Heart left ventricle (tissue), 16 donors: ENCODE measurements at regions of chr15 and their contacts with region 1.

Region 1: DNA sequence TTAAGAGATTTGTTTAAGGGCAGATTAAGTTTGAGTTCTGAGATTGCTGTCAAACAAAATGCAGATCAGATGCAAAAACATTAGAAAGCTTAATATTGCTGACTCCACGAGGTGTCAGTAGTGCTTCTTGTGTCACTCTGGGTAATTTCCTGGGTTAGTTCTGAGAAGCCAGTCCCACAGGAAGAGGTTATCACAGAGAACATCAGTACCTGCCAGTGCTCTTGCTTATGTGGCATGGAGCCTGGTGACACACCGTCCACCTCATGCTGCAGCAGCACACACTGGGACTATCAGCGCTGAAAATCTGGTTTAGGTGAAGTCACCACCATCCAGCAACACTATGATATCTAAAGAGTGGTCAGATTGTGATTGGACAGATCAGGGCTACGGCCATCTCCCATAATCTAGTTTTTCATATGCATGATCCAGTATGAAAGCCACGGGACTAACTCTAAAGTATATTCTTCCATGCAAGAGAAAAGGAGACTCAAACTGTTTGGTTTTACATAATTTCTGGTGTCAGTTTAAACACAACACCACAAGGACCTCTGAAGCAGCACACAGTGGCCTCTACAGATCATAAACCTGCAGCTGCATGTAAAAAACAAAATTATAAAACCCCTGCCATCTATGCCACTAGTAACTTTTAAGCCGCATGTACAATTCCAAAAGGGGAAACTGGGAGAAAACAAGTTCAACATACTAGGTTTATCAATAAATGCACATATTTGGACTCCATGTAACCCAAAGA is 36.1 kb upstream of the MYO5C start:
- DNase-seq: no peak
- ATAC-seq: peak in 3 of 4 donors; percentile 59 to 75 (median 68)
- H3K4me3 ChIP-seq: no peak overlapping the region
- H3K27ac ChIP-seq: peak overlapping the region in 1 of 12 donors; percentile 33
- H3K4me1 ChIP-seq: peaks cover 0 to 4% (median 0%) of the 10 kb centered on the region in 12 donors
- H3K27me3 ChIP-seq: no peaks in the 10 kb centered on the region
- CTCF ChIP-seq: peak in 11 of 12 donors; percentile 8 to 59 (median 46)
- POLR2A ChIP-seq: no peak

Region 2: GRCh38 chr15:52256366-52256765 is 75.3 kb before region 1 on chr15:
- intact Hi-C with region 1: loop called in 1 of 10 experiments (anchors 10 kb)
- DNase-seq: peak in 4 of 5 donors; percentile 38 to 66 (median 60)
- ATAC-seq: peak; percentile 41 to 67 (median 54)
- H3K4me3 ChIP-seq: peak overlapping the region in 1 of 12 donors; percentile 3
- H3K27ac ChIP-seq: no peak overlapping the region
- H3K4me1 ChIP-seq: peaks cover 0 to 26% (median 12%) of the 10 kb centered on the region in 12 donors
- H3K27me3 ChIP-seq: no peaks in the 10 kb centered on the region
- CTCF ChIP-seq: peak; percentile 67 to 83 (median 74)
- POLR2A ChIP-seq: no peak

Region 3: GRCh38 chr15:52284164-52284563 is 47.5 kb before region 1 on chr15:
- intact Hi-C with region 1: no loop called
- DNase-seq: no peak
- ATAC-seq: no peak
- H3K4me3 ChIP-seq: no peak overlapping the region
- H3K27ac ChIP-seq: no peak overlapping the region
- H3K4me1 ChIP-seq: peaks cover 0 to 9% (median 0%) of the 10 kb centered on the region in 12 donors
- H3K27me3 ChIP-seq: no peaks in the 10 kb centered on the region
- CTCF ChIP-seq: no peak
- POLR2A ChIP-seq: no peak

Region 4: GRCh38 chr15:52379395-52380106 is 47.9 kb after region 1 on chr15:
- intact Hi-C with region 1: no loop called
- DNase-seq: no peak
- ATAC-seq: peak in 1 of 4 donors; percentile 47
- H3K4me3 ChIP-seq: no peak overlapping the region
- H3K27ac ChIP-seq: peak overlapping the region in 1 of 12 donors; percentile 22
- H3K4me1 ChIP-seq: no peaks in the 10 kb centered on the region
- H3K27me3 ChIP-seq: no peaks in the 10 kb centered on the region
- CTCF ChIP-seq: no peak
- POLR2A ChIP-seq: no peak

Region 5: GRCh38 chr15:52392008-52392687 is 60.5 kb after region 1 on chr15:
- intact Hi-C with region 1: loop called in 1 of 10 experiments (anchors 10 kb)
- DNase-seq: no peak
- ATAC-seq: peak; percentile 63 to 81 (median 75)
- H3K4me3 ChIP-seq: no peak overlapping the region
- H3K27ac ChIP-seq: no peak overlapping the region
- H3K4me1 ChIP-seq: peaks cover 0 to 28% (median 2%) of the 10 kb centered on the region in 12 donors
- H3K27me3 ChIP-seq: no peaks in the 10 kb centered on the region
- CTCF ChIP-seq: no peak
- POLR2A ChIP-seq: no peak

Region 6: DNA sequence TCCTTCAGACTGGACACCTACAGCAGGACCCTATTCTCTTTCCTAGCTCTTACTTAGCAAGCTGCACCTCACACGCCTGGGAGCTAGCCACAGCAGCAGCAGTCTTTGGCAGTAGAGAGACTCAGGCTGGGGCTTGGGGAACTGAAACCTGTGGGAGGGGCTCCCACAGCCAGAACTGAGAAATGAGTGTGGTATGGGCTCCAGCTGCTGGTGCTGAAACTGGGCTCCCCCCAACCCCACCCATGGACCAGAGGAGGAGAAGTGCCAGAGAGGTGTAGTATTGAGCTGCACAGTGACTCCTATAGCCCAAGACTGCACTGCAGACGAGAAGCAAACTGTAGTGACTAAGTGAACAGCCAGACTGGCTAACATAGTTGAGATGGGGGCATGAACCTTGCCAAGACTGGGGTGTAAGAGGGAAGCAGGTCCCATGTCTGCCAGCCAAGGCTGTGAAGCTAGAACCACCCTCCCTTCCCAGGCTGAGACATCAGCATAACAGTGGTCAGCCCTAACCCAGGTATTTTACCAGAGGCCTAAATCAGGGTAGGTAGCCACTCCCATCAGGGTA is 134.6 kb after region 1 on chr15:
- intact Hi-C with region 1: loop called in 2 of 10 experiments (anchors 10 kb)
- DNase-seq: peak; percentile 38 to 66 (median 48)
- ATAC-seq: peak; percentile 18 to 89 (median 79)
- H3K4me3 ChIP-seq: no peak overlapping the region
- H3K27ac ChIP-seq: peak overlapping the region in 1 of 12 donors; percentile 12
- H3K4me1 ChIP-seq: peaks cover 0 to 42% (median 8%) of the 10 kb centered on the region in 12 donors
- H3K27me3 ChIP-seq: no peaks in the 10 kb centered on the region
- CTCF ChIP-seq: no peak
- POLR2A ChIP-seq: no peak

Region 7: DNA sequence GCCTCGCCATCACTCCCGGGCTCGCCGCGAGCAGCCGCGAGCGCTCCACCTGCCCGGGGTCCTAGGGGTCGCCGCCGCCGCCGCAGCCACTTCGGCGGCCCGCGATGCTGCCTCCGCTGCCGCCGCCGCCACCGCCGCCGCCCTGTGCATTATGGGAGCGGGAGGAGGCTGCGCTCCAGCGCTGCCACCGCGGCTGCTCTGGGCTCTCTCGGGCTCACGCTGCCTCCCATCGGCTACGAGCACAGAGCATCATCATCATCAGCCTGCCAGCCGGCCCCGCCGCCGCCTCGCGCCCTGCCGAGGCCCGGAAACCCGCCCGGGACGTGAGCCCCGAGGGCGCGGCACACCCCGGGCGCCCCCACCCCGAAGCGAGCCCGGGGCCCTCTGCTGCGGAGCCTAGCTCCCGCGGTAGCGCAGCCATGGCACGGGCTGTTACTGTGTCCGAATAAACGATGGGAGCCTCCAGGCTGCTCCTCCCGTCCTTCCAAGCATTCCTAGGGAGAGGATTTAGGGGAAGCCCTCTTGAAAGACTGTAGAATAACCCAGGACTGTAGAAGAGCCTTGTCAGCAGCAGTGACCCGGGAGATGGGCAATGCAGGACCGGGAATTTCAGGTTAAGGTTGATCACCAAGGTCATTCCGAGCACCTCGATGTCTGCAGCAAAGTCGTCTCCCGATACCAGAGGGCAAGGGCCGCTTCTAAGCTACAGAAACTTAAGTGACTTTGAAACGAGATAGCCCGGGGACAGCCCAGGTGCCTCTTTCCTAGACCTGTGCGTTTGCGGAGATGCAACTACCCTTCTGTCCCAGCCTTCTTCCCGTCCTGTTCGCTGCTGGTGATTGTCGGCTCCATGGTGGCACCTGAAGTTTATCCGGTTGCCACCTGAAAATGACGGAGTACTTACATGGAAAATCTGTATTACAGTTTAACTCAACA is 197.6 kb after region 1 on chr15:
- intact Hi-C with region 1: loop called in 1 of 10 experiments (anchors 10 kb)
- DNase-seq: peak; percentile 72 to 87 (median 78)
- ATAC-seq: peak; percentile 74 to 93 (median 90)
- H3K4me3 ChIP-seq: peak overlapping the region; percentile 70 to 95 (median 80)
- H3K27ac ChIP-seq: peak overlapping the region in 11 of 12 donors; percentile 62 to 93 (median 81)
- H3K4me1 ChIP-seq: peaks cover 0 to 33% (median 15%) of the 10 kb centered on the region in 12 donors
- H3K27me3 ChIP-seq: peaks cover 0 to 8% (median 0%) of the 10 kb centered on the region in 9 donors
- CTCF ChIP-seq: peak in 5 of 12 donors; percentile 4 to 34 (median 8)
- POLR2A ChIP-seq: no peak

Region 8: DNA sequence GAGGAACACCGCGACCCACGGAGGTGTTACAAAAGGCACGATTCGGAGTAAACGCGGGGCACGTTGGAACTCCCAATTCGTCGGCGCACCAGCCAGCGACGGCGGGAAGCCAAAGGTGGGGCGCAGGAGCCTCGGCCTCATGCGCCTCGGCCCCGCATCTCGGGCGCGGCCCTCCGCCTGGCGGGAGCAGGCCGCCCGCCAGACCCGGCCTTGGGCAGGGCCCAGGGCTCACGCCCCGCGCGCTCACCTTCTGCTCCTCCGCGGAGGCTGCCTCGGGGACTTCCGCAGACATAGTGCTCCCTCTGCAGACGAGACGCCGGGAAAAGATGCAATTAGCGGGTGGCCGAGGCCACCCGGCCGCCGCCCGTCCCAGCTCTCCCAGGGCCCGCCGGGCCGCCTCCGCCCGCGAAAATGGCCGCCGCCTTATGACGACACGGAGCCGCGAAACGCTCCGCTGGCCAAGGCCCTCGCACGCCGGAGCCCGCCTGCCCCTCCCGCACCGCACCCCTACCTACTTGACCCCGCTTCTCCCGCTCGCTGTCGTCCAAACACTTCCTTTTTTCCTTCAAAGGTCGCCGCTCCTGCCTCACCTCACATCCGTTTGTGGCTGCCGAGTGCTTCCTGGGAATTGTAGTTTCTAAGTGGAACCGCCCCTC is 237.1 kb after region 1 on chr15 and contains the start of gene ARPP19:
- intact Hi-C with region 1: loop called in 1 of 10 experiments (anchors 10 kb)
- DNase-seq: peak; percentile 88 to 94 (median 90)
- ATAC-seq: peak; percentile 80 to 96 (median 92)
- H3K4me3 ChIP-seq: peak within 1 kb of the TSS; percentile 63 to 94 (median 77)
- H3K27ac ChIP-seq: peak within 1 kb of the TSS; percentile 78 to 96 (median 94)
- H3K4me1 ChIP-seq: peaks cover 2 to 49% (median 33%) of the 10 kb centered on the region in 12 donors
- H3K27me3 ChIP-seq: no peaks in the 10 kb centered on the region
- CTCF ChIP-seq: peak in 8 of 12 donors; percentile 9 to 49 (median 21)
- POLR2A ChIP-seq: peak in 1 of 2 donors; percentile 76
- total RNA-seq, gene ARPP19: 77.2 to 182 (median 147) TPM

Region 9: GRCh38 chr15:52735231-52736089 is 403.8 kb after region 1 on chr15:
- intact Hi-C with region 1: loop called in 8 of 10 experiments (anchors 2 to 10 kb)
- DNase-seq: peak in 2 of 5 donors; percentile 51 to 52
- ATAC-seq: peak; percentile 68 to 88 (median 86)
- H3K4me3 ChIP-seq: no peak overlapping the region
- H3K27ac ChIP-seq: no peak overlapping the region
- H3K4me1 ChIP-seq: peaks cover 0 to 23% (median 9%) of the 10 kb centered on the region in 12 donors
- H3K27me3 ChIP-seq: no peaks in the 10 kb centered on the region
- CTCF ChIP-seq: peak; percentile 68 to 92 (median 86)
- POLR2A ChIP-seq: no peak